Activated B cell treated with CpG ODN at 0.5 μM for 24 hours (primary cell): ENCODE measurements at regions of chr10 and their contacts with region 1.

Region 1: GRCh38 chr10:101067356-101068083 is 5.7 kb downstream of the KAZALD1 start:
- DNase-seq: peak; percentile 63
- ATAC-seq: peak; percentile 64
- H3K4me3 Mint-ChIP-seq: peak overlapping the region; percentile 92
- H3K27ac Mint-ChIP-seq: no peak overlapping the region
- H3K4me1 Mint-ChIP-seq: peaks cover 51% of the 10 kb centered on the region
- H3K27me3 Mint-ChIP-seq: peaks cover 8% of the 10 kb centered on the region
- CTCF ChIP-seq: peak; percentile 76

Region 2: GRCh38 chr10:101050208-101051069 is 17.1 kb before region 1 on chr10:
- CTCF ChIA-PET with region 1: interaction called, 51 read pairs
- POLR2A ChIA-PET with region 1: interaction called, 3 read pairs
- intact Hi-C with region 1: loop called (anchors 1 kb)
- DNase-seq: peak; percentile 78
- ATAC-seq: peak; percentile 93
- H3K4me3 Mint-ChIP-seq: peak overlapping the region; percentile 24
- H3K27ac Mint-ChIP-seq: no peak overlapping the region
- H3K4me1 Mint-ChIP-seq: peaks cover 15% of the 10 kb centered on the region
- H3K27me3 Mint-ChIP-seq: peaks cover 38% of the 10 kb centered on the region
- CTCF ChIP-seq: peak; percentile 59

Region 3: GRCh38 chr10:101103430-101103829 is 35.9 kb after region 1 on chr10:
- CTCF ChIA-PET with region 1: no interaction called
- POLR2A ChIA-PET with region 1: no interaction called
- intact Hi-C with region 1: no loop called
- DNase-seq: no peak
- ATAC-seq: no peak
- H3K4me3 Mint-ChIP-seq: no peak overlapping the region
- H3K27ac Mint-ChIP-seq: no peak overlapping the region
- H3K4me1 Mint-ChIP-seq: no peaks in the 10 kb centered on the region
- H3K27me3 Mint-ChIP-seq: peaks cover 43% of the 10 kb centered on the region
- CTCF ChIP-seq: no peak